Pancreas (tissue), 10 donors: ENCODE measurements at regions of chr2 and their contacts with region 1.

Region 1: DNA sequence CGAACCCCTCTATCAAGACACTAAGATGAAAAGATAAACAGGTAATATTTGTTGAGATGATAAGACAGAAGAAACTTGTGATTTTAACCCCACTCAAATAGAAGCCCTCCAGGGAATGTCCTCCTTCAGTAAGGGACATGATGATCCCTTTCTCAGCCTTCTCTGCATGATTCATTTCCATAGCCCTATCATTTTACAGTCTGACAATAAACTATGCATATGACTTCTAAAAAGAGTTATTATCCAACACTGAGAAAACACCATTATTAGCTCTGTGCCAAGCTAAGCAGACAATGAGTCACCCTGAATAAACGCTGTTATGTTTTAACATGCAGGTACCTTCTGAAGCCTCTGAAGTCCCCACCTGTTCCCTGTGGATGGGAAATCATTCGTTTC is 54.7 kb downstream of the DTNB start:
- DNase-seq: peak in 1 of 6 donors; percentile 20
- ATAC-seq: peak; percentile 92 to 97 (median 96)
- H3K4me3 ChIP-seq: no peak overlapping the region
- H3K27ac ChIP-seq: peak overlapping the region in 3 of 4 donors; percentile 5 to 67 (median 48)
- H3K4me1 ChIP-seq: peaks cover 11 to 21% (median 19%) of the 10 kb centered on the region in 3 donors
- H3K27me3 ChIP-seq: no peaks in the 10 kb centered on the region
- CTCF ChIP-seq: no peak

Region 2: GRCh38 chr2:25664183-25664964 is 45.7 kb after region 1 on chr2:
- intact Hi-C with region 1: loop called in 1 of 3 experiments (anchors 10 kb)
- DNase-seq: peak in 4 of 6 donors; percentile 29 to 70 (median 57)
- ATAC-seq: peak; percentile 90 to 99 (median 98)
- H3K4me3 ChIP-seq: no peak overlapping the region
- H3K27ac ChIP-seq: no peak overlapping the region
- H3K4me1 ChIP-seq: no peaks in the 10 kb centered on the region
- H3K27me3 ChIP-seq: no peaks in the 10 kb centered on the region
- CTCF ChIP-seq: peak; percentile 37 to 59 (median 50)

Region 3: DNA sequence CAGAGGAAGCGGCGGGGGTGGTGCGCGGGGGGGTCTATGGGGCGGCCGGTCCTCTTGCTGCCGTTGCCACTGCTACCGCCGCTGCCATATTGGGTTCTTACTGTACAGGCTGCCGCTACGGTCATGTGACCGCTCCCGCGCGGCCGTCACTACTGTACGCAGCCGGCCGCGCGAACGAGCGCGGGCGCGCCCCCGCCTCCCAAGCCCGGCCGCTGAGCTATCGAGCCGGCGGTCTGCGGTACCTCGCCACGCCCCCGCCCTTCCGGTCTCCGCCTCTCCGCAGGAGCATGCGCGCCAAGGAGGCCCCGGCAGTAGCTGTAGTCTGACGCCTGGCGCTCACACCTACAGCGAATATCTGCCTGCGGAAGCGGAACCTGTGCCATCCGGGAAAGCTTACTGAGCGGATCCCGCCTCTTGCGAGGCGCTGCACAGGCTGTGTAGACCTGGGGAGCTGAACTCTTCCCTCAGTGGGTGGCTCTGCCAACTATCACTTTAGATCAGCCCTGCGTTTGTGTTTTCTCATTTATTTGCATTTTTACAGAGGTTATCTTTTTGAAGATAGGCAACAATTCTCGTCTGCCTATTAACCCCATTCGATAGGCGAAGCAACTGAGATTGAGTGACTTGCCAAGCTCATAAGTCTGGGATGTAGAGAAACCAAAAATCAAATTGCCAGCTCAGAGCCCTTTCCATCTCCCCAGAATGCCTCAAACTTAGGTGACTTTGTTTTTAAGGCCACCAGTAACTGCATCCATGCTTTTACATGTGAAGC is 259.9 kb after region 1 on chr2 and contains the start of gene ASXL2:
- intact Hi-C with region 1: no loop called
- DNase-seq: peak; percentile 97 to 99 (median 98)
- ATAC-seq: peak; percentile 92 to 99 (median 96)
- H3K4me3 ChIP-seq: peak within 1 kb of the TSS; percentile 80 to 95 (median 88)
- H3K27ac ChIP-seq: peak within 1 kb of the TSS; percentile 78 to 92 (median 82)
- H3K4me1 ChIP-seq: peaks cover 4 to 21% (median 13%) of the 10 kb centered on the region in 3 donors
- H3K27me3 ChIP-seq: no peaks in the 10 kb centered on the region
- CTCF ChIP-seq: no peak
- total RNA-seq, gene ASXL2: 8.9 to 21.7 (median 12.0) TPM